PC-9 (cell line): ENCODE measurements at regions of chr1 and their contacts with region 1.

Region 1: GRCh38 chr1:154707901-154708463 is 100.0 kb upstream of the ADAR start:
- DNase-seq: no peak
- H3K4me3 ChIP-seq: no peak overlapping the region
- H3K27ac ChIP-seq: no peak overlapping the region
- H3K4me1 ChIP-seq: no peaks in the 10 kb centered on the region
- H3K27me3 ChIP-seq: peaks cover 82% of the 10 kb centered on the region
- CTCF ChIP-seq: no peak

Region 2: GRCh38 chr1:154747740-154748404 is 39.9 kb after region 1 on chr1:
- CTCF ChIA-PET with region 1: interaction called, 17 read pairs
- POLR2A ChIA-PET with region 1: no interaction called
- intact Hi-C with region 1: no loop called
- DNase-seq: no peak
- H3K4me3 ChIP-seq: no peak overlapping the region
- H3K27ac ChIP-seq: no peak overlapping the region
- H3K4me1 ChIP-seq: no peaks in the 10 kb centered on the region
- H3K27me3 ChIP-seq: peaks cover 94% of the 10 kb centered on the region
- CTCF ChIP-seq: no peak

Region 3: GRCh38 chr1:154791292-154792166 is 83.5 kb after region 1 on chr1:
- CTCF ChIA-PET with region 1: no interaction called
- POLR2A ChIA-PET with region 1: no interaction called
- intact Hi-C with region 1: no loop called
- DNase-seq: peak in 1 of 2 experiments; percentile 16
- H3K4me3 ChIP-seq: no peak overlapping the region
- H3K27ac ChIP-seq: no peak overlapping the region
- H3K4me1 ChIP-seq: no peaks in the 10 kb centered on the region
- H3K27me3 ChIP-seq: peaks cover 85% of the 10 kb centered on the region
- CTCF ChIP-seq: no peak

Region 4: DNA sequence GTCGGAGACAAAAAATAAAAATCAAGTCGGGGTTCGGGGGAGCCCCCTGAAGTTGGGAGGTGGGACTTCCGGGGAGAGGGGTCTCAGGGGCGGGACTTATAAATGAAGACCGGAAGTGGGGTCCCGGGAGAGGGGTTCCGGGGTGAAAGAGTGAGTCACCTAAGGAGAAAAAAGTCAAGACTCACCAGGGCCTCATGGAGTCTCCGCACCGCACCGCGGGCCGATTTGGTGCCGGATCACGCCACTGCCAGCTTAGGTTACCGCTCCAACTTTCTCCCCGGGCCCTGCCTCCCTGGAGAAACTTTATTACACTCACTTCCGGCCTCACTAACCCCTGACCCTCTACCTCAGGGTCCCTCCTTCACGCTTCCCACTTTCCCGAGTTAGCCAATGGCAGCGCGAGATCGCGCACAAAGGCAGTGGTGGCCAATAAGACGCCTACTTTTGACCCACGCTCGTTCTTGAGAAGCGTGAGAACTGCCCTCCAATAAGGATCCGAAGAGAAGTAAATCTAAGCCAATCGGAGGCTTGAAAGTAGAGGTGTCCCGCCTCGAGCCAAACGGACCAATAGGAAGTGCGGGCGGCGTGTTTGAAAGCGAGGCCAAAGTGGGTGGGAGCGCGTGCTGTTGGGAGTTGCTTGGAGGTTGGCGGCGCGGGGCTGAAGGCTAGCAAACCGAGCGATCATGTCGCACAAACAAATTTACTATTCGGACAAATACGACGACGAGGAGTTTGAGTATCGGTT is 266.3 kb after region 1 on chr1 and contains the start of gene CKS1B:
- CTCF ChIA-PET with region 1: no interaction called
- POLR2A ChIA-PET with region 1: no interaction called
- intact Hi-C with region 1: no loop called
- DNase-seq: peak; percentile 96 to 100
- H3K4me3 ChIP-seq: peak within 1 kb of the TSS; percentile 87
- H3K27ac ChIP-seq: peak within 1 kb of the TSS; percentile 97
- H3K4me1 ChIP-seq: peaks cover 48% of the 10 kb centered on the region
- H3K27me3 ChIP-seq: no peaks in the 10 kb centered on the region
- CTCF ChIP-seq: no peak
- total RNA-seq, gene CKS1B: 236 and 300 TPM in 2 replicates